ENCODE measurements at regions of chr14 and their contacts with region 1.

Region 1: GRCh38 chr14:90256354-90257131 is at the start of gene PSMC1:
- DNase-seq: peak; percentile 78 to 92 (median 85)
- ATAC-seq: peak; percentile 94
- H3K4me3 ChIP-seq: peak within 1 kb of the TSS; percentile 79 to 95
- H3K4me3 Mint-ChIP-seq: peak within 1 kb of the TSS; percentile 99
- H3K27ac ChIP-seq: peak within 1 kb of the TSS; percentile 73 to 80
- H3K27ac Mint-ChIP-seq: peak within 1 kb of the TSS; percentile 97
- H3K4me1 ChIP-seq: peaks cover 17% of the 10 kb centered on the region
- H3K4me1 Mint-ChIP-seq: peaks cover 32% of the 10 kb centered on the region
- H3K27me3 ChIP-seq: no peaks in the 10 kb centered on the region
- H3K27me3 Mint-ChIP-seq: peaks cover 7% of the 10 kb centered on the region
- CTCF ChIP-seq: no peak
- total RNA-seq, gene PSMC1: 76.8 to 85.0 TPM

Region 2: GRCh38 chr14:89185919-89186855 is 1070.4 kb before region 1 on chr14:
- CTCF ChIA-PET with region 1: no interaction called
- POLR2A ChIA-PET with region 1: no interaction called
- intact Hi-C with region 1: no loop called
- DNase-seq: no peak
- ATAC-seq: no peak
- H3K4me3 ChIP-seq: no peak overlapping the region
- H3K4me3 Mint-ChIP-seq: no peak overlapping the region
- H3K27ac ChIP-seq: no peak overlapping the region
- H3K27ac Mint-ChIP-seq: peak overlapping the region; percentile 58
- H3K4me1 ChIP-seq: peaks cover 6% of the 10 kb centered on the region
- H3K4me1 Mint-ChIP-seq: peaks cover 34% of the 10 kb centered on the region
- H3K27me3 ChIP-seq: no peaks in the 10 kb centered on the region
- H3K27me3 Mint-ChIP-seq: no peaks in the 10 kb centered on the region
- CTCF ChIP-seq: no peak

Region 3: DNA sequence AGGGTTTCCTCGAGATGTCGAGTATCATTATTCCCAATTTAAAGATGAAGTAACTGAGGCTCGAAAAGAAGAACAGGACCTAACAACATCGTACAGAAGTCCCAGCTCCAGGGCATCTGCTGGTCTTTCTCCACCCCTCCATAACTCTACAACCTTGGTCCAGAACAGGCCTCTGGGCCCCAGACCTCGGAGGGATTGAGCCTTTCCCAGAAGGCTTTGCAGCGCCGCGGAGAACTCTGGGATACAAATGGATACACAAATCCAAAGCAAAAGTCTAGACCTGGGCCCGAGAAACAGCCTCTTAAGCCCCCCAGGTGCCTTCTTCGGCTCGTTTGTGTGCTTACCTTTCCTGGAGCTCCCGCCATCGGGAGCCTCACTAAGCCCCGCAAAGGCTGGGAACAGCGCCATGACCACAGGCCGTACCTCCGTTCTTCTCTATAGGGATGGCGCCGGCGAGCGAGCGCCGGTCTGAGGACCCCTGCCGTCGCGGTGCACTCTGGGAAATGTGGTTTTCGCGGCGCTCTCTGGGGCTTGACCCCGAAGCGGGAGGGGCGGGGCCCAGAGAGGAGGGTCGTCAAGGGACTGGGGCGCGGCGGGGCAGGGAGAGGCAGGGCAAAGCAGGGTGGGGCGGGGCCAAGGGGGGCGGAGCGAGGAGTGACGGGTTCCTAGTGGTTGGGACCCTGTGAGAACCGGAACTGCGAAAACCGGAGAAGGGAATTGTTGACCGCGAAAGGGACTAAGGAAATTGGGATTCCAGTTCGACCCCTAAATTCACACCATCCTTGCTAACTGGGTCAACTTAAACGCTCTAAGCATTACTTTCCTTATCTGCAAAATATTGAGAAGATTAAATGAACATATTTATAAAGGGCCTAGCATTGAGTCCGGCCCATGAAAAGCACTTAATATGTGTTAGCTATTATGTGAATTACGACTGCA is 75.2 kb after region 1 on chr14 and contains the start of gene NRDE2:
- CTCF ChIA-PET with region 1: no interaction called
- POLR2A ChIA-PET with region 1: no interaction called
- intact Hi-C with region 1: loop called in 1 of 2 experiments (anchors 2 kb)
- DNase-seq: peak; percentile 81 to 97 (median 93)
- ATAC-seq: peak; percentile 95
- H3K4me3 ChIP-seq: peak within 1 kb of the TSS; percentile 86 to 90
- H3K4me3 Mint-ChIP-seq: peak within 1 kb of the TSS; percentile 90
- H3K27ac ChIP-seq: peak within 1 kb of the TSS; percentile 63 to 88
- H3K27ac Mint-ChIP-seq: peak within 1 kb of the TSS; percentile 94
- H3K4me1 ChIP-seq: peaks cover 21% of the 10 kb centered on the region
- H3K4me1 Mint-ChIP-seq: peaks cover 32% of the 10 kb centered on the region
- H3K27me3 ChIP-seq: no peaks in the 10 kb centered on the region
- H3K27me3 Mint-ChIP-seq: peaks cover 11% of the 10 kb centered on the region
- CTCF ChIP-seq: no peak
- total RNA-seq, gene NRDE2: 22.8 to 23.0 TPM

Region 4: DNA sequence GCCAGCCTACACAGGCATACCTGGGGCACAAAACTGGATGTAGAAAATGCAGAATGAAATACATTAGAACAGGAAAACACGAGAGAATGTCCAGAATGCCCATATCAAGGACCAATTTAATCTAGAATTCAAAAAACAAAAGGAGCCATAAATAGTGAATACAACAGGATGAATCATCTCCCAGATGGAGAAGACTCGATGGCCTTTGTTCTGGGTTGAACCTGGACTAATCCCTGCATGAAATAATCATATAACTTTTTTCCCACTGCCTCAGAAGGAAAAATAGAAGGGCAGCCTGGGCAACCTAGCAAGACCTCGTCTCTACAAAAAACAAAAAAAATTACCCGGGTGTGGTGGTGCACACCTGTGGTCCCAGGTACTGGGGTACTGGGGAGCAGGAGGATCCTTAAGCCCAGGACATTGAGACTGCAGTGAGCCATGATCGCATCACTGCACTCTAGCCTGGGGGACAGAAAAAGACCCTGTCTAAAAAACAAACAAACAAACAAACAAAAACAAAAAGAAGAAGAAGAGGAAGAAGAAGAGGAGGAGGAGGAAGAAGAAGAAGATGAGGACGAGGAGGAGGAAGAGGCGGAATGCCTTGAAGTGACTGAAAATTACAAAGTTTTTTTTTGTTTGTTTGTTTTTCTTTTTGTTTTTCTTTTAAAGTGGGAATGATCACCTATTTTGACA is 105.5 kb after region 1 on chr14:
- CTCF ChIA-PET with region 1: no interaction called
- POLR2A ChIA-PET with region 1: no interaction called
- intact Hi-C with region 1: no loop called
- DNase-seq: no peak
- ATAC-seq: no peak
- H3K4me3 ChIP-seq: no peak overlapping the region
- H3K4me3 Mint-ChIP-seq: no peak overlapping the region
- H3K27ac ChIP-seq: no peak overlapping the region
- H3K27ac Mint-ChIP-seq: no peak overlapping the region
- H3K4me1 ChIP-seq: no peaks in the 10 kb centered on the region
- H3K4me1 Mint-ChIP-seq: no peaks in the 10 kb centered on the region
- H3K27me3 ChIP-seq: peaks cover 0 to 3% of the 10 kb centered on the region in 2 experiments
- H3K27me3 Mint-ChIP-seq: peaks cover 16% of the 10 kb centered on the region
- CTCF ChIP-seq: no peak